ENCODE measurements at regions of chr13 and their contacts with region 1.

Region 1: GRCh38 chr13:35630551-35631275 is 154.2 kb upstream of the MAB21L1 start:
- DNase-seq: peak in 1 of 2 donors; percentile 7
- ATAC-seq: peak in 7 of 8 donors; percentile 68 to 81 (median 76)
- H3K4me3 ChIP-seq: no peak overlapping the region
- H3K27ac ChIP-seq: no peak overlapping the region
- H3K4me1 ChIP-seq: no peaks in the 10 kb centered on the region
- H3K27me3 ChIP-seq: no peaks in the 10 kb centered on the region
- CTCF ChIP-seq: peak; percentile 53 to 78 (median 69)

Region 2: DNA sequence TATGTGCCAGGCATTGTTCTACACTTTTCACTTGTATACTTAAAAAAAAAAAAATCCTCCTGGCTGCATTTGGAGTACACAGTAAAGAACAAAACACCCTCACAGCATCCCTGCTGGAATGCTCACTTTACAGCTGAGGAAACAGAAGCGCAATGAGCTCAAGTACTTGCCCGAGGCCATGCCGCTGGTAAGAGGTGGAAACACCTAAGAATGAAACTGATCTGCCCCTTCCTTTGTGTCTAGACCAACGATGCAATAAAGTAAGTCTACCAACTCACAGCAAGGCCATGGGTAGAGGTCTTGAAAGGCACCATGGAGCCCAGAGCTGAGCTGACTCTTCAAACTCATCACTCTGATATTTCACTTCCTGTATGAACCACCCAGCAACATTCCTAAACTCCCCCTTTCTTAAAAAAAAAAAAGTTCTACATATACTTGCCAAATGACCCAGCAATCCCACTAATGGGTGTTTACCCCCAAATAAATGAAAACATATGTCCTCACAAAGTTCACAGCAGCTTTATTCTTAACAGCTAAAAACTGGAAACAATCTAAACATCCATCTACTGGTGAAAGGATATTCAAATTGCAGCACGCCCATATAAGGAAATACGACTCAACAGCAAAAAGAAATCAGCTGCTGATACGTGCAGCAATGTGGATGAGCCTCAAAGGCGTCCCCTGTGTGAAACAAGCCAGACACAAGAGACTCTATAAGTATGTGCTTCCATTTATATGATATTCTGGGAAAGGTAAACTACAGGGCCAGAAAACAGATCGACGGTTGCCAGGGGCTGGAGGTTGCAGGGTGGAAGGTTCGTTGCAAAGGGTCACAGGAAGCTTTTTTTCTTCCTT is 82.4 kb after region 1 on chr13:
- intact Hi-C with region 1: loop called in 2 of 10 experiments (anchors 5 kb)
- DNase-seq: no peak
- ATAC-seq: no peak
- H3K4me3 ChIP-seq: no peak overlapping the region
- H3K27ac ChIP-seq: no peak overlapping the region
- H3K4me1 ChIP-seq: peaks cover 0 to 29% (median 19%) of the 10 kb centered on the region in 9 donors
- H3K27me3 ChIP-seq: no peaks in the 10 kb centered on the region
- CTCF ChIP-seq: no peak

Region 3: GRCh38 chr13:35720690-35721554 is 90.2 kb after region 1 on chr13:
- intact Hi-C with region 1: loop called in 4 of 10 experiments (anchors 2 to 5 kb)
- DNase-seq: peak; percentile 35 to 56
- ATAC-seq: peak in 4 of 8 donors; percentile 25 to 57 (median 42)
- H3K4me3 ChIP-seq: peak overlapping the region in 5 of 10 donors; percentile 7 to 20 (median 13)
- H3K27ac ChIP-seq: peak overlapping the region in 3 of 10 donors; percentile 13 to 40 (median 26)
- H3K4me1 ChIP-seq: peaks cover 3 to 46% (median 34%) of the 10 kb centered on the region in 9 donors
- H3K27me3 ChIP-seq: no peaks in the 10 kb centered on the region
- CTCF ChIP-seq: peak; percentile 76 to 92 (median 87)

Region 4: GRCh38 chr13:35789335-35790165 is 158.8 kb after region 1 on chr13:
- intact Hi-C with region 1: loop called in 8 of 10 experiments (anchors 2 to 10 kb)
- DNase-seq: no peak
- ATAC-seq: peak in 4 of 8 donors; percentile 51 to 67 (median 55)
- H3K4me3 ChIP-seq: no peak overlapping the region
- H3K27ac ChIP-seq: no peak overlapping the region
- H3K4me1 ChIP-seq: no peaks in the 10 kb centered on the region
- H3K27me3 ChIP-seq: no peaks in the 10 kb centered on the region
- CTCF ChIP-seq: peak in 8 of 9 donors; percentile 41 to 74 (median 66)

Region 5: DNA sequence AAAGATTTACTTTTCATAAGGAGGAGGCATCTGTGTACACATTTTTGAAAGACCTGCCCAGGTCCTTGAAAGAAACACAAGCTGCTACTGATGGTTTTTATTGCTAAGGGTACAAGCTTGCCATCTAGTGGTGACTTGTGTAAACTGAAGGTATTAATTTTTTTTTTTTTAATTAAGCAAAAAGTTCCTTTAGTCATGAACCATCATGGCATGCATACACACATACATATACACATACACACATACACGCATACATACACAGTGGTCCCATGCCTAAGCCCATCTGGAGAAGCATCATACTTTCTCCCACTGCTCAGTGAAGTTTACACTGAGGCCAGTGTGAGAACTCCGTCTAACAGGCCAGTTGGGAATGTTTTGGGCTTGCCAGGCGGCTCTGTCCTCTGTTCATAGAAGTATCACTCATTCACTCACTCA is 187.9 kb after region 1 on chr13:
- intact Hi-C with region 1: loop called in 1 of 10 experiments (anchors 1 kb)
- DNase-seq: no peak
- ATAC-seq: peak in 6 of 8 donors; percentile 33 to 64 (median 38)
- H3K4me3 ChIP-seq: no peak overlapping the region
- H3K27ac ChIP-seq: no peak overlapping the region
- H3K4me1 ChIP-seq: peaks cover 0 to 7% (median 0%) of the 10 kb centered on the region in 9 donors
- H3K27me3 ChIP-seq: no peaks in the 10 kb centered on the region
- CTCF ChIP-seq: peak; percentile 62 to 81 (median 74)

Region 6: DNA sequence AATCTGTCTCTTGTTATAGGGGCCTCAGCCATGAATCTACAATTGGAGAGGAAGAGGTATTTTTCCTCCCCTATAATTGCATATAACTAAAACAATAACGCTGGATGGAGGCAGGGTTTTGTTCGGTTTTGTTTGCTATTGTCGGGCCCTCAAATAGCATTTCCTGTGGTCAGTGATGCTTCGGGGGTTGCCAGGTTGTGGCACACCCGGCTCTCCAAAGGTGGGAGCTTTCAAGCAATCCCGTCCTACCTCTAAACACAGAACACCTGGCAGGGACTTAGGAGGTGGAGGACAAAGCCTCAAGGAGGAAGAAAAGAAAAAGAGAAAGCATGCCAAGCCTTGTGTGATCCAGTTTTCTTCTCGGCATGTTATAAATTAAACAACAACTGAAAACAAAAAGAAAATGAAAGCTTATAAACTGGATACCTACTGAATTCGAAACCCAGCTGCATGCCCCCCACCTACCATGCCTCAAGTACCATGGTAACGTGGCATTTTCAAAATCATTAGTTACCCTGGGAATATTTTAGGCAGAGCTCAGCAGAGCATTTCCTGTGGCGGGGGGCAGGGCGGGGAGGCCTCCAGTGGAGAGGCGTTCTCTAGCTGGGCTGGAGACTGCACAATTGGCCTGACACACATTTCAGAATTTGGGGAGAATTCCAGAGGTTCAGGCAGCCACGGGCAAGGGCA is 286.7 kb after region 1 on chr13:
- intact Hi-C with region 1: no loop called
- DNase-seq: no peak
- ATAC-seq: peak in 2 of 8 donors; percentile 46 to 69
- H3K4me3 ChIP-seq: peak overlapping the region in 5 of 10 donors; percentile 14 to 46 (median 31)
- H3K27ac ChIP-seq: peak overlapping the region in 5 of 10 donors; percentile 13 to 61 (median 32)
- H3K4me1 ChIP-seq: peaks cover 0 to 16% (median 0%) of the 10 kb centered on the region in 9 donors
- H3K27me3 ChIP-seq: no peaks in the 10 kb centered on the region
- CTCF ChIP-seq: no peak